Vagina (tissue), 2 donors: ENCODE measurements at regions of chr14 and their contacts with region 1.

Region 1: DNA sequence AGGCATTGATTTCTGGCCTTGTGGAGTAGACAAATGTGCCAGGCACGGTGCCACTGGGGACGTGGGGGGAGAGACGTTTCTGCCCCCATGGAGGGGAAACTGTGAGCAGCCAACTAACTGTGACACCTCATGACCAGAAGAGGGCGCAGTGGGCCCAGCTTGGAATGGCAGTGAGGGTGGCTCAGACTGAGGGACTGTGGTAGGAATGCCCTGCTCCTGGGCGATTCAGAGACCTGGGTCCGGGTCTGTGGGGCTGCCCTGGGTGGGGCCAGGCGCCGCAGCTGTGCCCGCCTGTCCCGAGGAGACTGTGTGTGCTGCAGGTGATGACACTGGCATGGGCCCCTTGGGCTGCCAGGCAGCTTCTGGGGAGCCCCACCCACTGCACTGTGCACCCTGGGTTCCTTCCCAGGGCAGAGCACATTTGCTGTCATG is 60.6 kb downstream of the SLC25A47 start:
- DNase-seq: no peak
- H3K4me3 ChIP-seq: no peak overlapping the region
- H3K27ac ChIP-seq: no peak overlapping the region
- H3K4me1 ChIP-seq: peaks cover 5% of the 10 kb centered on the region
- H3K27me3 ChIP-seq: no peaks in the 10 kb centered on the region
- CTCF ChIP-seq: peak; percentile 51 to 64 (median 61)
- POLR2A ChIP-seq: no peak

Region 2: GRCh38 chr14:100239840-100240724 is 143.7 kb before region 1 on chr14:
- intact Hi-C with region 1: loop called (anchors 5 kb)
- DNase-seq: peak in 1 of 2 donors; percentile 93
- H3K4me3 ChIP-seq: peak overlapping the region; percentile 84 to 100
- H3K27ac ChIP-seq: peak overlapping the region; percentile 99
- H3K4me1 ChIP-seq: peaks cover 69% of the 10 kb centered on the region
- H3K27me3 ChIP-seq: no peaks in the 10 kb centered on the region
- CTCF ChIP-seq: peak in 2 of 3 experiments; percentile 66 to 67
- POLR2A ChIP-seq: no peak

Region 3: GRCh38 chr14:100463937-100464336 is 80.2 kb after region 1 on chr14:
- intact Hi-C with region 1: no loop called
- DNase-seq: peak in 1 of 2 donors; percentile 54
- H3K4me3 ChIP-seq: no peak overlapping the region
- H3K27ac ChIP-seq: no peak overlapping the region
- H3K4me1 ChIP-seq: no peaks in the 10 kb centered on the region
- H3K27me3 ChIP-seq: no peaks in the 10 kb centered on the region
- CTCF ChIP-seq: no peak
- POLR2A ChIP-seq: no peak

Region 4: DNA sequence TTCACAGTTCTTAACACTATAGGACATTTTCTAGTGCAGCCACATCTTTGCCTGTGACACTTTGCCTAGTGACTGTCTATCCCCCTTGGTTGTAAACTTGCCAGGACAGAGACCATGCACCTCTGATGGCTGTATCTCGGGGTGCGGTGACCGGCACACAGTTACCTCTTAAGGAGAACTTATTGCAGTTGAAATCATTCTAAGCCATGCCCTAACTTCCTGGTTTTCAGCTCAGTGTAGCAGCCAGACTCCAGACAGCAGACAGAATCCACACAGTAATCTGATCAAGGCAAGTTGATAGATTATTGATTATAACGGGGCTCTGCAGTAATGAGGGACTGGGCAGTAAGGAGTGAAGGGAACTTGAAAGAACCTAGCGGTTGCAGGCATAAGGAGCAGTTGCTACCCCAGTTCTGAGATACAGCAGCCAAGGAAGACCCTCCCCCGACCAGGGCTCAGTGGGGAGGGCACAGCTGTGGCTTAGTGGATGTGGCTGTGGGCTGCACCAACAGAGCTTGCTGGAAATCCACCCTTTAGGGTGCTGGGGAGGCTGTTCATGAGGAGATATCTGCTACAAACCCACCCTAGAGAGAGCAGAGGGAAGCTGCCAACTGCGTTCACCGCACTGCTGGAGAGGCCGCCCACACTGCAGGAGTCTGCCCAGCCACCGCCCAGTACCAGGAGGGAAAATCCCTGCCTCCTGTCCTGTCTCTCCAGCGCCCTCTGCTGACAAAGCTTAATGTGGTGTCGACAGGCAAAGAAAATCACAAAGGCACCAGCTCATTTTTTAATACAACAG is 261.6 kb after region 1 on chr14:
- intact Hi-C with region 1: loop called (anchors 5 kb)
- DNase-seq: no peak
- H3K4me3 ChIP-seq: no peak overlapping the region
- H3K27ac ChIP-seq: no peak overlapping the region
- H3K4me1 ChIP-seq: peaks cover 5% of the 10 kb centered on the region
- H3K27me3 ChIP-seq: no peaks in the 10 kb centered on the region
- CTCF ChIP-seq: peak; percentile 61 to 67 (median 62)
- POLR2A ChIP-seq: no peak